Prostate gland (tissue), 2 donors: ENCODE measurements at regions of chr9 and their contacts with region 1.

Region 1: DNA sequence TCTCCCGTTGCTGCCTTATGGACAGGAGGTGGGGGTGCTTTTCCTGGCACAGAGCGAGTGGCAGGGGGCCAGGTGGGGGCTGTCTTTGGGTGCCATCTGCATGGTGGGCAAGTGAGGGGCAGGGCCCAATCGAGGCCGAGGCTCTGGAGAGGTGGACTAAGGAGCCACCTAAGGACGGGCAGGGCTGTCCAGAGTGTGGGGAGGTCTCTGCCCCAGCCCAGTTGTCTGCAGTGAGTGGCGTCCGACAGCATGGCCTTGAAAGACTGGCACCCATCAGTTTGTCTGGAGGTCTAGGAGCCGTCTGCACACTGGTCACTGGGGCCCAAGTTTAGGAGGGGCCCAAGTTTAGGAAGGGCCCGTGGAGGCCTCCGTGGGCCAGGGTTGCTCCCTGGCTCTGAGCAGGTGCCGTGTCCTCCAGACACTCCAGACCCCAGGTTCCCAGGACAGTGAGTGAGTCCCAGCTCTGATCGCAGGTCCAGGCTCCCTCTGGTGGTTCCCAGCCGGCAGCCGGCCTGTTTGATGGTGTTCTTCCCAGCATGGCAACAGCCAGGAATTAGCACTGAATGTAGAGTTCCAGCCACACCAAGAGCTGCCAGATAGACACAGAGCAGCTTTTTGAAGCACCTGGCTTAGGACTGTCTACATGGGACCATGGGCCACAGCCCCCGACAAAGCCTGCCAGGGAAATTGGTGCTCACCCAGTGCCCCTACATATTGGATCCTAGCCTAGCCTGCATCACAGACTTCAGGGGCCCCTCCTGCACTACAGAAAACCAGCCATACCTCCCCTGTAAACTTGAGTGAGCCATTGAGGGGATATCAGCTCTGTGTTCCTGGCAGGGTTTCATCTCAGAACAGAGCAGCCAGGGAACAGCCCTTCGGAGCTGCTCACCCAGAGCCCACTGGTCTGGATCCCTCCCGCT is 120.9 kb downstream of the WNK2 start:
- DNase-seq: peak; percentile 77
- H3K4me3 ChIP-seq: no peak overlapping the region
- H3K27ac ChIP-seq: peak overlapping the region in 1 of 2 donors; percentile 61
- H3K4me1 ChIP-seq: no peaks in the 10 kb centered on the region
- H3K27me3 ChIP-seq: no peaks in the 10 kb centered on the region
- CTCF ChIP-seq: peak; percentile 50 to 83 (median 74)
- POLR2A ChIP-seq: no peak

Region 2: GRCh38 chr9:93071464-93071863 is 233.4 kb before region 1 on chr9:
- intact Hi-C with region 1: no loop called
- DNase-seq: no peak
- H3K4me3 ChIP-seq: no peak overlapping the region
- H3K27ac ChIP-seq: no peak overlapping the region
- H3K4me1 ChIP-seq: no peaks in the 10 kb centered on the region
- H3K27me3 ChIP-seq: no peaks in the 10 kb centered on the region
- CTCF ChIP-seq: no peak
- POLR2A ChIP-seq: no peak

Region 3: GRCh38 chr9:93111371-93112115 is 193.3 kb before region 1 on chr9:
- intact Hi-C with region 1: loop called (anchors 5 kb)
- DNase-seq: no peak
- H3K4me3 ChIP-seq: no peak overlapping the region
- H3K27ac ChIP-seq: no peak overlapping the region
- H3K4me1 ChIP-seq: no peaks in the 10 kb centered on the region
- H3K27me3 ChIP-seq: no peaks in the 10 kb centered on the region
- CTCF ChIP-seq: no peak
- POLR2A ChIP-seq: no peak

Region 4: DNA sequence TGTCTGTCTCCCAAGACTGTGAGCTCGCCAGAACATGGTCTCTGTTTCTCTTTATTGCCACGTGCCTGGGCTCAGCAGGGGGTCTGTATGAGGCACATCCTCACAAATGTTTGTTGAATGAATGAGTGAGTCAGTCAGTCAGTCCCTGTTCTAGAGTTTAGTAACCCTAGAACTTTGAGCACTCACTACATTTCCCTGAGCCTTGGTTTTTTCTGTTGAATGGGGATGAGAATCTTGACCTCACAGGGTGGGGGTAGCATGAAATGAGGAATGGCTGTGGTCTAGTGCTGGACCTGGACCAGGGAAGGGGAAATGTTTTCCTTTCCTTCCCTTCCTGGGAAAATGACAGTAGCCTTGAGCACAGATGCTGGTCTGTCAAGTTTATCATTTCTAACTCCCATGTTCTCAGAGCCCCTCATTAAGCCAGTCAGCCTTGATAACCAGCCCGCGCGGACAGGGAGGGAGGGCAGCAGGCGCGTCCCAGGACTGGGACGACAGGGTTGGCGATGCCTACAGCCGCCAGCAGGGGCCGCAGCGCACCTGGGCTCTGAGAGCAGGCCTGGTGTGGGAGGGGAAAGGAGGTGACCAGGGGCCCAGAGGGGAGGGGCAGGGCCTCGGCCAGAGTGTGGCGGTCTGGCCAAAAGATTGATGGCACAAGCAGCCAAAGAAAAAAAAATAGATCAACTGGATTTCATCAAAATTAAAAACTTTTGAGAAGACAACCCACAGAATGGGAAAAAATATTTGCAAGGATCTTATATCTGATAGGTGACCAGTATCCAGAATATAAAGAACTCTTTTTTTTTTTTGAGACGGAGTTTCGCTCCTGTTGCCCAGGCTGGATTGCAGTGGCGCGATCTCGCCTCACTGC is 145.0 kb before region 1 on chr9:
- intact Hi-C with region 1: loop called (anchors 2 kb)
- DNase-seq: peak; percentile 81
- H3K4me3 ChIP-seq: no peak overlapping the region
- H3K27ac ChIP-seq: no peak overlapping the region
- H3K4me1 ChIP-seq: no peaks in the 10 kb centered on the region
- H3K27me3 ChIP-seq: no peaks in the 10 kb centered on the region
- CTCF ChIP-seq: peak; percentile 87 to 99 (median 94)
- POLR2A ChIP-seq: no peak